HCT116 (cell line): ENCODE measurements at regions of chr11 and their contacts with region 1.

Region 1: DNA sequence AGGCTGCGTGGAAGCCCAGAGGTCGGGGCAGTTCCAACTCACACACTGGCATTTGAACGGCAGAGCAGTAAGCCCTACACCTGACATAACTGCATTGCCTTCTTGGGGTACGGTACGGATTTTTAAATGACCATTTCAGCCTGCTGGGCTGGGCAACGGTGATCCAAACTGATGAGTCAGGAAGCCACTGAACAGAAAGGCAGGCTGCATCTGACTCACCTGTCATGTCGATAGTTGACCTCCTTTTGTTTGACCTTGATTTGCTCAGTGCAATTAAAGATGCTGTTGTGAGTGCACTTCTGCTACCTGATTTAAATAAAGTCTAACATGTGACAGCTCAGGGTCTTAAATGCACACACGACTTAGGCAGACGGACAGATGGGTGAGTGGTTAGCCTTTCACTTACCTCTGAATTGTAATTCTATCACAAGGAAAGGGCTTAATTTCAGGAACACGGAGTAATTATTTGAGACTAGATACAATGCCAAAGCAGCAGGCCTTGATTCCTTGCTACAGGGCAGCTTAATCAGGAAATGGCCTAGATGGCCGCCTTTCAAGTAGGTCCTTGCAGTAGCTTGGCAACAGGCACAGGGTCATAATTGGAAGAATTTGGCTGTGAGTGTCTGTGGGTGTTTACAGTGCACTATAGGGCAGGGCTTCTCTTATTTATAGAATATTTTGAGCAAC is 52.2 kb downstream of the BMAL1 start:
- DNase-seq: no peak
- ATAC-seq: peak; percentile 43
- H3K4me3 ChIP-seq: no peak overlapping the region
- H3K27ac ChIP-seq: no peak overlapping the region
- H3K4me1 ChIP-seq: peaks cover 45 to 56% of the 10 kb centered on the region in 2 experiments
- H3K27me3 ChIP-seq: no peaks in the 10 kb centered on the region
- CTCF ChIP-seq: no peak
- POLR2A ChIP-seq: no peak
- RAD21 ChIP-seq: no peak

Region 2: GRCh38 chr11:13287036-13287435 is 42.8 kb before region 1 on chr11:
- CTCF ChIA-PET with region 1: no interaction called
- POLR2A ChIA-PET with region 1: no interaction called
- RAD21 ChIA-PET with region 1: no interaction called
- intact Hi-C with region 1: loop called (anchors 2 kb)
- DNase-seq: no peak
- ATAC-seq: no peak
- H3K4me3 ChIP-seq: no peak overlapping the region
- H3K27ac ChIP-seq: no peak overlapping the region
- H3K4me1 ChIP-seq: peaks cover 1 to 2% of the 10 kb centered on the region in 2 experiments; a peak in 3 of 4 replicates
- H3K27me3 ChIP-seq: no peaks in the 10 kb centered on the region
- CTCF ChIP-seq: no peak
- POLR2A ChIP-seq: no peak
- RAD21 ChIP-seq: no peak

Region 3: GRCh38 chr11:13434247-13435205 is 104.7 kb after region 1 on chr11:
- CTCF ChIA-PET with region 1: no interaction called
- POLR2A ChIA-PET with region 1: no interaction called
- RAD21 ChIA-PET with region 1: no interaction called
- intact Hi-C with region 1: no loop called
- DNase-seq: no peak
- ATAC-seq: no peak
- H3K4me3 ChIP-seq: no peak overlapping the region
- H3K27ac ChIP-seq: no peak overlapping the region
- H3K4me1 ChIP-seq: no peaks in the 10 kb centered on the region
- H3K27me3 ChIP-seq: no peaks in the 10 kb centered on the region
- CTCF ChIP-seq: no peak
- POLR2A ChIP-seq: no peak
- RAD21 ChIP-seq: no peak